IMR-90 (cell line): ENCODE measurements at regions of chr14 and their contacts with region 1.

Region 1: GRCh38 chr14:94036313-94037050 is 10.3 kb downstream of the OTUB2 start:
- DNase-seq: peak; percentile 57
- ATAC-seq: peak; percentile 98
- H3K4me3 ChIP-seq: no peak overlapping the region
- H3K27ac ChIP-seq: no peak overlapping the region
- H3K4me1 ChIP-seq: peaks cover under 1% of the 10 kb centered on the region
- H3K27me3 ChIP-seq: no peaks in the 10 kb centered on the region
- CTCF ChIP-seq: peak; percentile 87
- POLR2A ChIP-seq: no peak
- RAD21 ChIP-seq: peak; percentile 75

Region 2: DNA sequence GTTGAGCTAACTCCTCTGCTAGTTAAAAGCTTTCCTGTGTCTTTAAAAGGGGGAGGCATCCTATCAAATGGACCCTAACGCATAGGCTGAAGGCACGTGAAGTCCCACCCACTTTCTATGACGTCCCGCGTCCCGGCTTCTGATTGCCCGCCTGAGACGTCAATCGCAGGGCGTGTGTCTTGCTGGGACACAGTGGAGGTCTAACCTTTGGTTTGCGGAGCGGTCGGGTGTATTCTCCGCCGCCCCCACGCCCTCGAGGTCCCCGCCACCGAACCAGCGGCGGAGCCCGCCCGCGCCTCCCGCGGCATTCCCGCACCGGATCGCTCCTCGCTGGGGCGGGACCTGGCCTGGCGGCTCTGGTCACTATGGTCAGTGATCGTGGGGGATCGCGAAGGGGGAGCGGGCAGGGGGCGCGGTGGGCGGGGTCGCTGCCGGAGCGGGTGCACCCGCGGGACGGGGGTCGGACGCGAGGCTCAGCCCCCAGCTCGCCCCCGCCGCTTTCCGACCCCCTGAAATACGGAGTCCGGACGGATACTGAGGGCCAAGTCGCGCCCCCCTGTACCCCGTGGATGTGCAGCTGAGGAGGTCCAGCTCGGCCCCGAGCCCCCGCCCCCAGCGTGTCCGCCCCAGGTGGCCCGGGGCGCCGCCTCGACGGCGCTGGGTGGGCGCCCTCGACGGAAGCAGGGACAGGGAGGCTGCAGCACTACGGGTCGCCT is 10.2 kb before region 1 on chr14 and contains the start of gene OTUB2:
- CTCF ChIA-PET with region 1: interaction called, 10 read pairs
- POLR2A ChIA-PET with region 1: no interaction called
- dilution Hi-C with region 1: no loop called
- in situ Hi-C with region 1: no loop called
- intact Hi-C with region 1: no loop called
- DNase-seq: peak; percentile 98
- ATAC-seq: peak; percentile 100
- H3K4me3 ChIP-seq: peak within 1 kb of the TSS; percentile 60
- H3K27ac ChIP-seq: no peak within 1 kb of the TSS
- H3K4me1 ChIP-seq: no peaks in the 10 kb centered on the region; the same call in 1 of the 2 replicates
- H3K27me3 ChIP-seq: no peaks in the 10 kb centered on the region; the same call in 1 of the 2 replicates
- CTCF ChIP-seq: no peak
- POLR2A ChIP-seq: no peak
- RAD21 ChIP-seq: no peak
- total RNA-seq, gene OTUB2: 2.2 and 2.5 TPM in 2 replicates

Region 3: DNA sequence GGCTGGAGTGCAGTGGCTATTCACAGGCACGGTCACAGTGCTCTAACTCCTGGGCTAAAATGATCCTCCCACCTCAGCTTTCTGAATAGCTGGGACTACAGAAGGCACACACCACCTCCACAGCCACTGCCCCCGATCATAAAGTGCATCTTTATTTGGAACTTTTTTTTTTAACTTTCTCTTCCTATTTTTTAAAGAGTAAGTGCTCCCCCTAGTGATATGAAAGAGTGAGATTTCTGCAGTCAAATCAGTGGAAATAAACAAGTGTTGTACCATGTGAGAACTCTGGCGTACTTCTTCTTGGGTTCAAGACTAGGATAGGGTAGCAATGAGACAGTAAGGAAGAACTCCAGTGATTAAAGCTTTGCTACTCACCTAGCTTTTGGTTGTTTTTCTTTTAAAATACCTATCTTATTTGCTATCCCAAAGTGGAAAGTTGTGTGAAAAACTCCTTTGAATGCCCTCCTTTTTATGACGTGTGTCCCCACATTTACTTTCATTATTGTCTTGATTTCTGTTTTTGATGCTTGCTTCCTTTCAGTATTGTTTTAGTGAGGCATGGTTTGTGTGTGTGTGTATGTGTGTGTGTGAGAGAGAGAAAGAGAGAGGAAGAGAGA is 144.3 kb after region 1 on chr14:
- CTCF ChIA-PET with region 1: interaction called, 4 read pairs
- POLR2A ChIA-PET with region 1: no interaction called
- dilution Hi-C with region 1: no loop called
- in situ Hi-C with region 1: no loop called
- intact Hi-C with region 1: loop called (anchors 1 kb)
- DNase-seq: peak; percentile 42
- ATAC-seq: peak; percentile 59; the same call in 1 of the 2 replicates
- H3K4me3 ChIP-seq: no peak overlapping the region
- H3K27ac ChIP-seq: no peak overlapping the region
- H3K4me1 ChIP-seq: no peaks in the 10 kb centered on the region
- H3K27me3 ChIP-seq: peaks cover 10% of the 10 kb centered on the region
- CTCF ChIP-seq: peak; percentile 66
- POLR2A ChIP-seq: no peak
- RAD21 ChIP-seq: peak; percentile 47